ENCODE measurements at regions of chr22 and their contacts with region 1.

Region 1: DNA sequence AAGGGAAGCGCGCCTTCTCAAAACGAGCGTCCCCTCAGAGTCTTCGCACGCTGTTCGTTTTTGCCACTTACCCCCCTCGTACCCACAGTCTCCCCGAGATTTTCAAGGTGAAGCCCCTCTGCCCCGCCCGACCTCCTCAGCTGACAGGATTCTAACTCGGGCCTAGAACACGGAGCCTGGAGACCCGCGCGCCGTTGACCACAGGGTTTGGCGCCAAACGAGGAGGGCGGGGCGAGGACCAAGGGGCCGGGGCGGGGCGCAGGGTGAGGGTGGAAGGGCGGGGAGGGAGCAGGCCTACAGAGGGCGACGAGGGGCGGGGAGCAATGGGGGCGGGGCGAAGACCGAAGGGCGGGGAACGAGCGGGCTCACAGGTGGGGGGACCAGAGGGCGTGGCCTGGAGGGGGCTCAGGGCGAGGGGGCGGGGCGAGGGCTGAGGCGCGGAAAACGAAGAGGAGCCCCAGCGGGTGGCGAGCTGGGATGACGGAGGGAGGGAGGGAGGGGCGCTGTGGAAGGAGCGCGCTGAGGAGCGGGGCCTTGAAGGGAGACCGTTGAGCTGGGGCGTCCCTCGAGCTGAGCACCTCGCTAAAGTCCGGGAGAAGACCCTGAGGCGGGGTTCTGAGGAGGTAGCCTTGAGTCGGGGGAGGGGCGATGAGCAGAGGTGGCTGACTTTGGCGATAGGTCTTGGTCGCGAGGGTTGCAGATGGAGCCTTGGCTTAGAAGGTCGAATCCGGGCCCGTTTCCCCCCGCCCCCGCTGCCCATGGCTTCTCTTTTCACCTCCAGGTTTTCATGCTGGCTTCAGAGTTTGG is at the start of gene DMC1:
- DNase-seq: peak; percentile 88
- H3K4me3 Mint-ChIP-seq: peak within 1 kb of the TSS; percentile 94
- H3K27ac Mint-ChIP-seq: peak within 1 kb of the TSS; percentile 95
- H3K4me1 Mint-ChIP-seq: peaks cover 23% of the 10 kb centered on the region
- H3K27me3 Mint-ChIP-seq: no peaks in the 10 kb centered on the region
- total RNA-seq, gene DMC1: 10.8 and 13.6 TPM in 2 replicates

Region 2: DNA sequence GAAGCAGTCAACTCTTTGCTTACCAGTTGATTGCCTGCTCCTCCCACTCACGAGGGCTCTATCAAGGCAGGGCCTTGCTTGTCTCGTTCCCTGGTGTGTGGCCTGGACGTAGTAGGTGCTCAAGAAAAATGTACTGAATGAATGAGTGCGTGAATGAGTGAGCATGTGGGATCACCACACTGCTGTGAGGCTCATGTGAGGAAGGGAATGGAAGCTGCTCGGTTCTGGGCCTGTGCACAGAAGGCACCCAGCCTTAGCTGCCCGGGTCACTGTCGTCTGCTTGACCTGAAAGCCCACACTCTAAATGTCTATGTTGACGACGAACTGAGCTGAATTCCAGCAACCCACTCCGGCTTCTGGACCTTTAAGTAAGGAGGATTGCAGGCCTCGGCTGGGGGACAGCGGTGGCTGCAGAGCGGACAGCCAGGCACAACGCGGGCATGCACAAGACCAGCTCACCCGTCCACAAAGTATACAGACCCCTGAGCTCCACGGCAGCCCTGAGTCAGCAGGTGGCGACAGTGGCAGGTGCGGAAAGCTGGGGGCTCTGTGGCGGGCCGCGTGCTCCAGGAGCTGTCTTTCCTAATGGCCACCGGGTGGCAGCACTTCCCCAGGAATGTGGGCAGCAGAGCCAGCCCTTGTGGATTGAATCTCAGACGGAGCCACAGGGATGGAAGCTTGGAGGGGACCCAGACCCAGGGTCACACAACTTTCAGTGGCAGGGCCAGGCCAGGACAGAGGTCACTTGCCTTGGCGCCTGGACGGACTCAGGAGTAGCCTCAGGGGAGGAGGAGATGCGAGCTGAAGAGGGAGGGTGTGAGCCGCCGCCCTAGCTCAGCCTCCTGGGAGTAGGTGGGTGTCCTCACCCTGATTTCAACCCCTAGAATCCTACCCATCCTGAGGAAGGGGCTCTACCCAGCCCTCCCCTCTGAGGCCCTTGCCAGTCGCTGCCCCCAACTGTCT is 518.0 kb before region 1 on chr22:
- intact Hi-C with region 1: loop called (anchors 5 kb)
- DNase-seq: peak; percentile 60
- H3K4me3 Mint-ChIP-seq: no peak overlapping the region
- H3K27ac Mint-ChIP-seq: no peak overlapping the region
- H3K4me1 Mint-ChIP-seq: peaks cover 5% of the 10 kb centered on the region
- H3K27me3 Mint-ChIP-seq: peaks cover 6% of the 10 kb centered on the region

Region 3: DNA sequence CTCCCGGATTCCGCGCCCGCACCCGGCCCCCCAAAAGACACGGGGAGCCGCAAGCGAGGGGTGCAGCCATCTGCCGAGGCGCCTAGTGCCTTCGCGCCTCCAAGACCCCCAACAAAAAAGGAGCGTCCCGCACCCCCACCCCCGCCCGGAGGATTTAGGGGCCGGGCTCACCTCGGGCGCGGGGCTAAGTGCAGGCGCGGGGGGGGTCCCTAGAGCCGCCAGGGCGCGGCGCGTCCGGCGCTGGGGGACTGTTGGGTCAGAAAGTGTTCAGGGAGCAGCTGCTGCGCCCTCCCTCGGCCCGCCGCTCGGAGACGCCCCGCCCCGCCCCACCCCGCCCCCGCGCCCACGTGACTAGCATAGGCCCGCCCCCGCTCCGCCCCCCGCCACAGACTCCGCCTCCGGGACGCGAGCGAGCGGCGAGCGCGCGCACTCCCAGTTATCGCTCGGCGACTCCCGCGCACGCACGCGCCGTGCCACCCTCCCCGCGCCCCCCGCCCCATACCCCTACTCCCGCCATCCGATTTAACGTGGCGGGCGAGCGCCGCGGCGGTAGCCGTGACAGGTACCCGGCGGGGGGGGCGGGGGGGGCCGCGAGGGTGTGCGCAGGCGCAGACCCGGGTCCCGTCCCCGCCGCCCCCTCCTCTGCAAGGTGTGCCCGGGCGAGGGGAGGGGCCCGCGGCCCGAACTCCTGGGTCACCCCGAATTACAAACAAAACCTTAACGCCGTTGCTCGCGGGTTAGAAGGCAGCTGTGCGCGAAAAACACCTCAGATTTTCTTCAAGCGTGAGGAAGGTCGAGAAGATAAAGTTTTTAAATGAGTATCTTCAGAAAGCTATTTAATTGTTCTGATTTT is 171.3 kb before region 1 on chr22:
- intact Hi-C with region 1: loop called (anchors 5 kb)
- DNase-seq: peak; percentile 75
- H3K4me3 Mint-ChIP-seq: peak overlapping the region; percentile 82
- H3K27ac Mint-ChIP-seq: no peak overlapping the region
- H3K4me1 Mint-ChIP-seq: peaks cover 40% of the 10 kb centered on the region
- H3K27me3 Mint-ChIP-seq: peaks cover 21% of the 10 kb centered on the region

Region 4: GRCh38 chr22:38412435-38413084 is 157.6 kb before region 1 on chr22:
- intact Hi-C with region 1: loop called (anchors 2 kb)
- DNase-seq: no peak
- H3K4me3 Mint-ChIP-seq: no peak overlapping the region
- H3K27ac Mint-ChIP-seq: no peak overlapping the region
- H3K4me1 Mint-ChIP-seq: no peaks in the 10 kb centered on the region
- H3K27me3 Mint-ChIP-seq: peaks cover 2% of the 10 kb centered on the region

Region 5: GRCh38 chr22:38481162-38481870 is 88.9 kb before region 1 on chr22:
- intact Hi-C with region 1: loop called (anchors 5 kb)
- DNase-seq: no peak
- H3K4me3 Mint-ChIP-seq: no peak overlapping the region
- H3K27ac Mint-ChIP-seq: no peak overlapping the region
- H3K4me1 Mint-ChIP-seq: peaks cover 17% of the 10 kb centered on the region
- H3K27me3 Mint-ChIP-seq: no peaks in the 10 kb centered on the region

Region 6: GRCh38 chr22:38506118-38506962 is 63.8 kb before region 1 on chr22 and contains the start of gene DDX17:
- intact Hi-C with region 1: loop called (anchors 1 kb)
- DNase-seq: peak; percentile 94
- H3K4me3 Mint-ChIP-seq: peak within 1 kb of the TSS; percentile 99
- H3K27ac Mint-ChIP-seq: peak within 1 kb of the TSS; percentile 100
- H3K4me1 Mint-ChIP-seq: peaks cover 36% of the 10 kb centered on the region
- H3K27me3 Mint-ChIP-seq: no peaks in the 10 kb centered on the region
- total RNA-seq, gene DDX17: 378 and 391 TPM in 2 replicates